ENCODE measurements at regions of chr6 and their contacts with region 1.

Region 1: DNA sequence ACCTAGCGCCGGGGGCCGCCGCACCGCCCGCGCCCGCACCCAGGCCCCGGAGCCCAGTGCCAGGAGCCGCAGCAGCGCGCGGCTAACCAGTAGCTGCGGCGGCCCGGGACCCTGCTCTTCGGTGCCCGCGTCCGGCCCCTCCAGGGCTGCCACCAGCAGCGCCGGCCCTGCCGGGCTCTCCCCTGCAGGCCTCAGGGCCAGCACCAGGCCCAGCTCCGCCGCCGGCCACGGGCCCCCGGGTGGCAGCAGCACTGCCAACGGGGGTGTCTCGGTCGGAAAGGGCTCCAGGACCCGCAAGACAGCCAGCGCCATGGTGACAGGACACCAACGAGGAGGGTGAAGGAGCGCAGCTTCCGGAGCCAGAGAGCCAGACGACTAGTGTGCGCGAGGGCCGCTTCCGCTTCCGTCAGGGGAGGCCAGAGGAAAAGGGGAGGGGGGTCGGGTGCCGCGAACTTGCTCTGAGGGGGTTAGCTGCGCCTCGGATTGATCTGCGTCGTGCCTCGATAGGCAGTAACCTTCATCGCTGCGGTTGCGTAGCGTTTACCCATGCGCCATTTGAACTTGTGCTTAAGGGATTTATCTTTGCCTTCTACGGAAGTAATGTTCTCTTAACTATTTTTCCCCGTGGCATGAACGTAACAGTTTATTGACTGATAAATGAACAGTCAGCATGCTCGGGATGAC is at the start of gene PEX6:
- DNase-seq: peak; percentile 90
- ATAC-seq: peak; percentile 91
- H3K4me3 ChIP-seq: peak within 1 kb of the TSS; percentile 79 to 96 (median 95)
- H3K27ac ChIP-seq: peak within 1 kb of the TSS; percentile 73
- H3K4me1 ChIP-seq: peaks cover 44% of the 10 kb centered on the region
- H3K27me3 ChIP-seq: no peaks in the 10 kb centered on the region; a peak in 1 of 5 replicates
- CTCF ChIP-seq: peak; percentile 33; the same call in 1 of the 2 replicates
- EP300 ChIP-seq: no peak; a peak in 1 of 4 replicates
- POLR2A ChIP-seq: peak; percentile 96
- RAD21 ChIP-seq: 0 out of 2 replicates have a peak, but pooled peaks have one; percentile 17
- total RNA-seq, gene PEX6: 3.6 and 5.1 TPM in 2 replicates

Region 2: DNA sequence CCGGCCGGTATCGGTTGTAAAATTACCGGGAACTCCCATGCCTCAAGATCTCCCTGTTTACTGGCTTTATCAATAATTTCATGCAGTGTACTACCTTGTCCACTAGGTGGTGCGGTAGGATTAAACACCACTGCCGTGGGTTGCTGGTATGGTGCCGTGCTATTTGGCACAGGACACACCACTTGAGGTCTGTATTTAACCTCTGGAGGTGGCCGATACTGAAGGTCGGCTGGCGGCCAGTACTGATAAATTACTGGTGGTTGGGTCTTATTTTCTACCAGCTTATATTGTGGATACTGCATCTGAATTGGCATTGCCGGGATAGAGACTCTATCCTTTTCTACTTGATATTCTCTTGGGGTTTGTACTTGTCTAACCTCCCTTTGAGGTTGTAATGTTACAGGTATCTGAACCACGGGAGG is 77.4 kb before region 1 on chr6:
- CTCF ChIA-PET with region 1: no interaction called
- POLR2A ChIA-PET with region 1: interaction called, 11 read pairs
- in situ Hi-C with region 1: no loop called
- intact Hi-C with region 1: loop called (anchors 2 kb)
- DNase-seq: peak; percentile 92
- ATAC-seq: peak; percentile 94
- H3K4me3 ChIP-seq: peak overlapping the region; percentile 48 to 71 (median 63)
- H3K27ac ChIP-seq: no peak overlapping the region
- H3K4me1 ChIP-seq: peaks cover 38% of the 10 kb centered on the region
- H3K27me3 ChIP-seq: no peaks in the 10 kb centered on the region
- CTCF ChIP-seq: peak; percentile 98
- EP300 ChIP-seq: 0 out of 4 replicates have a peak, but pooled peaks of 1 of the 2 experiments have one; percentile 16
- POLR2A ChIP-seq: no peak
- RAD21 ChIP-seq: peak; percentile 96

Region 3: DNA sequence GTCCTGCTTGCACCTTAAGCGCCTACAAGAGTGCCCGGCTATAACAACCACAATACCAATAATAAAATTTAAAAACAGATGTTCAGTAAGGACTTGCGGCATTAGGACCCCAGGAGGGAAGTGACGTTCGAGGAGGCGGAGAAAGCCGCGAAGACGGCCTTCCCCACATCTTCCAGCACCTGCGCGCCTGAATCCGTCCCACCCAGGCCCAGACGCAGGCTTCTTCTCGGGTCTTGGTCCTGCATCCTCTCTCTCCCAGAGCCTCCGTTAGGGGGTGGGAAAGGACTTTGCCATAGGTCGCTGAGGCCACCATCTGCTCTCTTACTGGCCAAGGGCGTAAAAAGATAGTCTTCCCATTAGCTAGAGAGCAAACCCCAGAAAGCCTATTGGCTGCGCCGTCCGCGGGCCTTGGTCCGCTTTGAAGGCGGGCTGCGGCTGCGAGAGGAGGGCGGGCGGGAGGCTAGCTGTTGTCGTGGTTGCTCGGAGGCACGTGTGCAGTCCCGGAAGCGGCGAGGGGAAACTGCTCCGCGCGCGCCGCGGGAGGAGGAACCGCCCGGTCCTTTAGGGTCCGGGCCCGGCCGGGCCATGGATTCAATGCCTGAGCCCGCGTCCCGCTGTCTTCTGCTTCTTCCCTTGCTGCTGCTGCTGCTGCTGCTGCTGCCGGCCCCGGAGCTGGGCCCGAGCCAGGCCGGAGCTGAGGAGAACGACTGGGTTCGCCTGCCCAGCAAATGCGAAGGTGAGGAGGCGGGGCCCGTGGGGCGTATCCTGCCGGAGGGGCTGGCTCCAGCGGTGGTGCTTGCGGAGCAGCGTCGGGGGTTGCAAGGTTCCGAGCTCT is 49.8 kb before region 1 on chr6 and contains the start of gene CNPY3:
- CTCF ChIA-PET with region 1: no interaction called
- POLR2A ChIA-PET with region 1: interaction called, 36 read pairs
- in situ Hi-C with region 1: no loop called
- intact Hi-C with region 1: no loop called
- DNase-seq: peak; percentile 97
- ATAC-seq: peak; percentile 94
- H3K4me3 ChIP-seq: peak within 1 kb of the TSS; percentile 71 to 79 (median 78)
- H3K27ac ChIP-seq: peak within 1 kb of the TSS; percentile 83
- H3K4me1 ChIP-seq: peaks cover 64% of the 10 kb centered on the region
- H3K27me3 ChIP-seq: no peaks in the 10 kb centered on the region; a peak in 1 of 5 replicates
- CTCF ChIP-seq: peak; percentile 46
- EP300 ChIP-seq: peak in 1 of 2 experiments; percentile 8; a peak in 1 of 4 replicates
- POLR2A ChIP-seq: peak; percentile 70 to 74
- RAD21 ChIP-seq: peak; percentile 44
- total RNA-seq, gene CNPY3: 31.4 and 60.2 TPM in 2 replicates

Region 4: GRCh38 chr6:42963855-42964605 is 15.0 kb before region 1 on chr6:
- CTCF ChIA-PET with region 1: no interaction called
- POLR2A ChIA-PET with region 1: interaction called, 38 read pairs
- in situ Hi-C with region 1: no loop called
- intact Hi-C with region 1: no loop called
- DNase-seq: peak; percentile 76
- ATAC-seq: peak; percentile 44
- H3K4me3 ChIP-seq: no peak overlapping the region
- H3K27ac ChIP-seq: no peak overlapping the region
- H3K4me1 ChIP-seq: peaks cover 35% of the 10 kb centered on the region
- H3K27me3 ChIP-seq: no peaks in the 10 kb centered on the region; a peak in 1 of 5 replicates
- CTCF ChIP-seq: peak; percentile 72
- EP300 ChIP-seq: no peak
- POLR2A ChIP-seq: no peak
- RAD21 ChIP-seq: peak; percentile 62

Region 5: DNA sequence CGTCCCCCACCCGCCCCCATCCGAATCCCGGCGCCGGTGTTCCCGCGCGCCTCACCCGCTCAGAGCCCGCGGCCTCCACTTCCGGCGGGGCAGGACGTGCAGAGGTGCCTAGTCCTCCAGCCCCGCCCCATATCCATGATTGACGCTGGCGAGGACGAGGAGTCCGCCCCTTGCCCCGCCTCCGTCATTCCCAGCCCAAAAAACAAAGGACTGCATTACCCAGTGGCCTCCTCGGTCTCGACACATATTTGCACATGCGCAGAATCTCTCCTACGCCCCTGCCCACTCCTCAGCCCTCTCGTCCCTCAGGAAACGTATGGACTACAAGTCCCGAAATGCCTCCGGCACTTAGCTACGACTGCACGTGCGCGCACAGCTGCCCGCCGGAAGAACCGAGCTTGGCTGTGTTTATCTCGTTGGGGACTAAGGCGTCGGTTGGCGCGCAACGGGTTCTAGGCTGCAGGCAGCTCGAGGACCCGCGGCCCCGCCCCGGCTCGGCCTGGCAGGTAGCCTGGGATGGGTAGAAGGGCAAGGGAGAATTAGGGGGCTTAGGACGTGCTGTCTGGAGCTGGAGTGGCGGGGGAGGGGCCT is 35.0 kb after region 1 on chr6 and contains the starts of genes KLHDC3 and MEA1:
- CTCF ChIA-PET with region 1: no interaction called
- POLR2A ChIA-PET with region 1: interaction called, 55 read pairs
- in situ Hi-C with region 1: no loop called
- intact Hi-C with region 1: loop called (anchors 1 kb)
- DNase-seq: peak; percentile 100
- ATAC-seq: peak; percentile 94
- H3K4me3 ChIP-seq: peak within 1 kb of the TSS; percentile 88 to 93 (median 91)
- H3K27ac ChIP-seq: peak within 1 kb of the TSS; percentile 44
- H3K4me1 ChIP-seq: peaks cover 38% of the 10 kb centered on the region
- H3K27me3 ChIP-seq: no peaks in the 10 kb centered on the region; a peak in 1 of 5 replicates
- CTCF ChIP-seq: no peak
- EP300 ChIP-seq: no peak; a peak in 1 of 4 replicates
- POLR2A ChIP-seq: peak in 1 of 2 experiments; percentile 68; a peak in 2 of 4 replicates
- RAD21 ChIP-seq: no peak
- total RNA-seq, gene KLHDC3: 91.5 and 92.5 TPM in 2 replicates
- total RNA-seq, gene MEA1: 86.2 and 110 TPM in 2 replicates

Region 6: DNA sequence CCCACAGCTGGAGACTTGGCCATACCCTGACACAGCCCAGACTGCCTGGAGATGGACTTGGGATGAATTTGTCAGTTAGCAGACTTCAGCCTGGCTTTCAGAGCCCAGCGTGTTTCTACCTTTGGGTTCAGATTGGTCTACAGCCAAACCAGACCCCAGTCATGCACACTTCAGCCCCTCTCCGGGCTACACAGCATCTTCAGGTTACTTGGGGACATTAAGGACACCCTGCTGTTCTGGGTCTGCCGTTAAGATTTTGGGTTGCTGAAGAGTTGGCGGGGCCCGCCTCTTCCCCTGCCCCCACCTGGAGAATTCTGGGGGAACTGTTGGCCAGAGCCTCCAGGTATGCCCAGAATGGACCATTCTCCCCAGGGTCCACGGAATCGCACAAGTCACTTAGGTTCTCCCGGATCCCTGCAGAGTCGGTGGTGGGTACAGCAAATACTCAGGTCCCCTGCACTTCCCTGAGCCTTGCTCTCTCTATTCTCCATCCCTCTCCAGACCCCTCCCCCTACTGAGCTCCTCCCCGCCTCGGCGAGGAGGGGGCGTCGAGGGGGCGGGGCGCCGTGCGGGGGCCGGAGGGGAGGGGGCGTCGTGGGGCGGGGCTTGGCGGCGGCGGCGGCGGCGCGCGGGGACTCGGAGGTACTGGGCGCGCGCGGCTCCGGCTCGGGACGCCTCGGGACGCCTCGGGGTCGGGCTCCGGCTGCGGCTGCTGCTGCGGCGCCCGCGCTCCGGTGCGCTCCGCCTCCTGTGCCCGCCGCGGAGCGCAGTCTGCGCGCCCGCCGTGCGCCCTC is 96.9 kb after region 1 on chr6 and contains the start of gene PTK7:
- CTCF ChIA-PET with region 1: no interaction called
- POLR2A ChIA-PET with region 1: interaction called, 10 read pairs
- in situ Hi-C with region 1: no loop called
- intact Hi-C with region 1: no loop called
- DNase-seq: peak; percentile 74
- ATAC-seq: peak; percentile 73
- H3K4me3 ChIP-seq: peak within 1 kb of the TSS; percentile 99 to 100 (median 100)
- H3K27ac ChIP-seq: peak within 1 kb of the TSS; percentile 84
- H3K4me1 ChIP-seq: peaks cover 42% of the 10 kb centered on the region
- H3K27me3 ChIP-seq: no peaks in the 10 kb centered on the region; a peak in 1 of 5 replicates
- CTCF ChIP-seq: no peak
- EP300 ChIP-seq: no peak
- POLR2A ChIP-seq: peak in 1 of 2 experiments; percentile 74; a peak in 2 of 4 replicates
- RAD21 ChIP-seq: no peak
- total RNA-seq, gene PTK7: 48.5 and 99.8 TPM in 2 replicates

Region 7: GRCh38 chr6:43228951-43229802 is 250.2 kb after region 1 on chr6 and contains the start of gene DNPH1:
- CTCF ChIA-PET with region 1: no interaction called
- POLR2A ChIA-PET with region 1: no interaction called
- in situ Hi-C with region 1: no loop called
- intact Hi-C with region 1: no loop called
- DNase-seq: peak; percentile 59
- ATAC-seq: peak; percentile 95
- H3K4me3 ChIP-seq: peak within 1 kb of the TSS; percentile 69 to 82 (median 81)
- H3K27ac ChIP-seq: peak within 1 kb of the TSS; percentile 49
- H3K4me1 ChIP-seq: peaks cover 27% of the 10 kb centered on the region
- H3K27me3 ChIP-seq: peaks cover 0 to 18% of the 10 kb centered on the region in 2 experiments; a peak in 2 of 5 replicates
- CTCF ChIP-seq: peak; percentile 88
- EP300 ChIP-seq: 0 out of 4 replicates have a peak, but pooled peaks of 1 of the 2 experiments have one; percentile 24
- POLR2A ChIP-seq: peak; percentile 79 to 84
- RAD21 ChIP-seq: peak; percentile 97
- total RNA-seq, gene DNPH1: 75.0 and 75.1 TPM in 2 replicates

Region 8: GRCh38 chr6:43386492-43386891 is 407.5 kb after region 1 on chr6:
- CTCF ChIA-PET with region 1: no interaction called
- POLR2A ChIA-PET with region 1: no interaction called
- in situ Hi-C with region 1: no loop called
- intact Hi-C with region 1: no loop called
- DNase-seq: peak; percentile 21
- ATAC-seq: no peak
- H3K4me3 ChIP-seq: no peak overlapping the region
- H3K27ac ChIP-seq: no peak overlapping the region
- H3K4me1 ChIP-seq: no peaks in the 10 kb centered on the region
- H3K27me3 ChIP-seq: peaks cover 0 to 29% of the 10 kb centered on the region in 2 experiments; a peak in 4 of 5 replicates
- CTCF ChIP-seq: peak; percentile 38
- EP300 ChIP-seq: no peak
- POLR2A ChIP-seq: no peak
- RAD21 ChIP-seq: no peak

Measured in HepG2 (cell line).